ENCODE measurements at regions of chr11 and their contacts with region 1.

Region 1: GRCh38 chr11:115324581-115325432 is 179.4 kb downstream of the CADM1 start:
- DNase-seq: no peak
- H3K4me3 ChIP-seq: peak overlapping the region in 2 of 4 donors; percentile 13 to 29
- H3K27ac ChIP-seq: no peak overlapping the region
- H3K4me1 ChIP-seq: peaks cover 0 to 11% (median 5%) of the 10 kb centered on the region in 4 donors
- H3K27me3 ChIP-seq: no peaks in the 10 kb centered on the region
- CTCF ChIP-seq: peak; percentile 73 to 77 (median 75)
- EP300 ChIP-seq: no peak
- POLR2A ChIP-seq: no peak

Region 2: GRCh38 chr11:116224154-116224888 is 899.5 kb after region 1 on chr11:
- intact Hi-C with region 1: loop called (anchors 5 kb)
- DNase-seq: no peak
- H3K4me3 ChIP-seq: no peak overlapping the region
- H3K27ac ChIP-seq: no peak overlapping the region
- H3K4me1 ChIP-seq: peaks cover 0 to 6% (median 2%) of the 10 kb centered on the region in 4 donors
- H3K27me3 ChIP-seq: peaks cover 0 to 21% (median 0%) of the 10 kb centered on the region in 4 donors
- CTCF ChIP-seq: peak; percentile 37 to 70 (median 52)
- EP300 ChIP-seq: no peak
- POLR2A ChIP-seq: no peak

Region 3: DNA sequence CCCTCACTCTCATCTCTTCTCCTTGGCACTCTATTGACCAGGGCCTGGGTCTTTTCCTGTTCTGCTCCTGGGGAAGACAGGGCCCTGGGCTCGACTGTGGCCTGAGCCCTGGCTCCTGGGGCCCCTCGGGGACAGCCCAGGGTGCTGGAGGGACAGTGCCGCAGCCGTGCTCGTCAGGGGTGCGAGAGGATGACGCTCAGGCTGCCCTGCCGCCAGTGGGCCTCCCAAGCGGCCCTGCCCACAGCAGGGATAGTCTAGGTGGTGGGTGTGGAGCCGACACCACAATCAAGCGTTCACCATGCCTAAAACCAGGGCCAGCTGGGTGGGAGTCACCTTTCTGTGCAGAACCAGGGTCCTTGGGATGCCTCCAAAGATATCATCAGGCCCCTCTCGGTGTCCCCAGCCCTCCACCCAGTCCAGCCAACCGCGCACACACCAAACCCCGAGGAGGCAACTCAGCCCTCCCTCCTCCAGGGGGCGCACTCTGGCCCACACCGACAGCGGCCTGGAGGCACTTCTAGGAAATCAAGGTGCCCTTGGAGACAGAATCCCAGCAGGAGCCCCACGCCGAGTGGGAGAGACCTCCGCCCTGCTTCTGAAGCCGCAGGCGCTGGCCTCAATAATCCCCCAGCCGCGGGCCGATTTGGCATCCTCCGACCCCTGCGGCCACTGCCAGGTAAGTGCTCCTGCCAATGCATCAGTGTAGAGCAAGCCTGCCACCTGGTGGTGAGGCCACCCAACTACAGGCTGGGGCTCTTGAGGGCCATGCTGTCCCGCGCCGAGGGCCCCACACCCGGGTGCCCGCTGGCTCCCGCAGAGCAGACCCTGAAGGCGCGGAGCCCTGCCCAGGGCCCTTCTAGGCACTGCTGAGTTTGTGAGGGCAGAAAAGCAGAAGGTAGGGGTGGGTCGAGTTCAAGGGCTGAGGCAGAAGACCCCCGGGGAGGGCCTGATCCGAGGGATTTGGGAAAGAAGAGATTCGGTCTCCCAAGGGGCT is 951.5 kb after region 1 on chr11:
- intact Hi-C with region 1: loop called (anchors 2 kb)
- DNase-seq: no peak
- H3K4me3 ChIP-seq: peak overlapping the region in 3 of 4 donors; percentile 34 to 52 (median 35)
- H3K27ac ChIP-seq: no peak overlapping the region
- H3K4me1 ChIP-seq: peaks cover 6 to 9% (median 8%) of the 10 kb centered on the region in 4 donors
- H3K27me3 ChIP-seq: peaks cover 0 to 38% (median 0%) of the 10 kb centered on the region in 4 donors
- CTCF ChIP-seq: peak; percentile 89 to 97 (median 94)
- EP300 ChIP-seq: no peak
- POLR2A ChIP-seq: no peak